Gastrocnemius medialis (tissue), 4 donors: ENCODE measurements at regions of chr18 and their contacts with region 1.

Region 1: DNA sequence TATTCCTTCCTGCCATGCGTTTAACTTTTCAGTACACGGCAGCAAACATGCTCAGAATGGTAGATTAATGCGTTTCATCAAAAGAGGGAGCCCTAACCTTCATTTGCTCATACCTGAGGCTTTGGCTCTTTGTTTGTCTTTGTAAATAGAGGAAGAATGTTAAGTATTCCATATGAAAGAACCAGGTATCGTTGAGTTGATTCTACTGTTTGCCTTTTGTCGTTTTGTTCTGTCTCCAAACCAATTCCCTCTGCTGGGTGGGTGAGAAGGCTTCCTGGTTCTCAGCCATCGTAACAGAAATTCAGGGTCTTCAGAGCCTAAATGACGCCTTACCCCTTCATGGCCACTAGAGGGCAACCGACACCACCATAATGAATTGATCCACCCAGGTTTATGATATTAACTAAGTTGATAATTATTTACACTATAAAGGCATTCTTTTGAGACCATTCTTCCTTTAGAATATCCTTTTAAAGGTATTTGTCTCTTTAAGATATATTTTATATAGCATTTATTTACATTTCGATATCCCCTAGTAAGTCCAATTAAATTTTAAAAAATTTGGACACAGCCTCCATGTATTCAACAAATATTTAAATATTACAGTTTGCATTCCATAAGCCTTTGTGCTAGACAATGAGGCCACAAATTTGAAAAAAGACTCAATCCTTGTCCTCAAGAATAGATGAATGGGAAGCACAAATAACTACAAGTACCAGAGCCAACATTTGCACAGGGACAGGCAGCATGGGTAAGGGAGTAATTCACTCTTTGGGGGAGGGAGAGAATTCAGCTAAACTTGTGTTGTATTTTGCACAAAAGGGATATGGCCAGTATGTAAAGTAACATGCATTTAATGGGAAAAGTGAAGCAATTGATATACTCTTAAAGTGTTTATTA is 48.1 kb downstream of the TIMM21 start:
- DNase-seq: no peak
- ATAC-seq: peak in 1 of 2 donors; percentile 61
- H3K4me3 ChIP-seq: peak overlapping the region in 1 of 4 donors; percentile 31
- H3K27ac ChIP-seq: no peak overlapping the region
- H3K4me1 ChIP-seq: no peaks in the 10 kb centered on the region
- H3K27me3 ChIP-seq: peaks cover 0 to 7% (median 3%) of the 10 kb centered on the region in 3 donors
- CTCF ChIP-seq: peak; percentile 79 to 89 (median 85)
- POLR2A ChIP-seq: no peak

Region 2: GRCh38 chr18:74342416-74343043 is 146.1 kb after region 1 on chr18:
- in situ Hi-C with region 1: loop called (anchors 5 to 10 kb)
- intact Hi-C with region 1: loop called (anchors 1 kb)
- DNase-seq: no peak
- ATAC-seq: no peak
- H3K4me3 ChIP-seq: no peak overlapping the region
- H3K27ac ChIP-seq: no peak overlapping the region
- H3K4me1 ChIP-seq: no peaks in the 10 kb centered on the region
- H3K27me3 ChIP-seq: no peaks in the 10 kb centered on the region
- CTCF ChIP-seq: peak in 4 of 5 experiments; percentile 40 to 72 (median 70)
- POLR2A ChIP-seq: no peak

Region 3: GRCh38 chr18:74476140-74476539 is 279.7 kb after region 1 on chr18:
- in situ Hi-C with region 1: loop called in 1 of 4 experiments (anchors 10 kb)
- intact Hi-C with region 1: no loop called
- DNase-seq: no peak
- ATAC-seq: no peak
- H3K4me3 ChIP-seq: no peak overlapping the region
- H3K27ac ChIP-seq: no peak overlapping the region
- H3K4me1 ChIP-seq: no peaks in the 10 kb centered on the region
- H3K27me3 ChIP-seq: no peaks in the 10 kb centered on the region
- CTCF ChIP-seq: peak in 3 of 5 experiments; percentile 23 to 60 (median 48)
- POLR2A ChIP-seq: no peak

Region 4: GRCh38 chr18:74551936-74552555 is 355.6 kb after region 1 on chr18:
- in situ Hi-C with region 1: loop called in 3 of 4 experiments (anchors 5 to 10 kb)
- intact Hi-C with region 1: loop called (anchors 1 kb)
- DNase-seq: peak; percentile 40 to 60
- ATAC-seq: peak; percentile 93 to 95
- H3K4me3 ChIP-seq: no peak overlapping the region
- H3K27ac ChIP-seq: no peak overlapping the region
- H3K4me1 ChIP-seq: peaks cover 0 to 6% of the 10 kb centered on the region in 2 donors
- H3K27me3 ChIP-seq: no peaks in the 10 kb centered on the region
- CTCF ChIP-seq: peak; percentile 48 to 79 (median 68)
- POLR2A ChIP-seq: no peak